Sigmoid colon (tissue), 7 donors: ENCODE measurements at regions of chr10 and their contacts with region 1.

Region 1: DNA sequence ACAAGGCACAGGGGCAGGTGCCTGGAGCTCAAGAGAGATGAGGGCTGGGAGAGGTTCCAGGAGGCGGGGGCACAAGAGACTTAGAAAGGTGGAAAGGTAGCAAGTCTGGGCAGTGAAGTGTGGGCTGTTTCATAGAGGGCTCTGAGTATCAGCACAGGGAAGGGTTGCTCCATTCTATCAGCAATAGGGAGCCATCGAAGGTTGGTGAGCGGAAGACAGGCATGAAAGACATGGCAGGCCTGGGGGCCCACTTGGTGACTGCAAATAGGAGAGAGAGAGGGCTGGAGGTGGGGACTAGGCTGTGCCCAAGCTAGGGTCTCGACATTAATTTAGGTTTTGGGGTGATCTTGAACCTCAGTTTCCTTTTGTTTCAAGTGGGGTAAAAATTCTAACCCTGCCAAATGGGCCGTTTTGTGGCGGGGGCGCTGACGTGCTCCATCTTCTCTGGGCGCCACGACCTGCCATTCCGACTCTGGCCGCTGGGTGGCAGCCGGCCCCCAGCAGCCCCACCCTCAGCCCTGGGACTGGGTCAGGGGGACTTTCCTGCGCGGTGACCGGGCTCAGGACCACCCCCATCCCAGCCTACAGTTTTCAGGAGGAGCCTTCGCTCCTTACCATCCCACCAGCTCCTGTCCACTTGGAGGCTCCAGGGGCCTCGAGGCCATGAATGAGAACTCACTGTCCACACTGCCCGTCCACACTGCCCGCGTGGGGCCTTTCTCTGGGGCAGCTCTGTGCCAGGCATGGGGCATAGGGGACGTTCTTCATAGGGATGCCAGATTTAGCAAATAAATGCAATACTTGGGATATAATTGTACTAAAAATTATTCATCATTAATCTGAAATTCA is 37.2 kb upstream of the PCBD1 start:
- DNase-seq: no peak
- H3K4me3 ChIP-seq: no peak overlapping the region
- H3K27ac ChIP-seq: no peak overlapping the region
- H3K4me1 ChIP-seq: peaks cover 0 to 15% (median 7%) of the 10 kb centered on the region in 4 donors
- H3K27me3 ChIP-seq: no peaks in the 10 kb centered on the region
- CTCF ChIP-seq: peak; percentile 82 to 98 (median 90)
- EP300 ChIP-seq: no peak
- POLR2A ChIP-seq: no peak

Region 2: GRCh38 chr10:70191972-70192305 is 733.7 kb before region 1 on chr10:
- intact Hi-C with region 1: no loop called
- DNase-seq: no peak
- H3K4me3 ChIP-seq: no peak overlapping the region
- H3K27ac ChIP-seq: peak overlapping the region in 2 of 4 donors; percentile 16 to 25
- H3K4me1 ChIP-seq: peaks cover 0 to 12% (median 0%) of the 10 kb centered on the region in 4 donors
- H3K27me3 ChIP-seq: no peaks in the 10 kb centered on the region
- CTCF ChIP-seq: no peak
- EP300 ChIP-seq: no peak
- POLR2A ChIP-seq: no peak

Region 3: DNA sequence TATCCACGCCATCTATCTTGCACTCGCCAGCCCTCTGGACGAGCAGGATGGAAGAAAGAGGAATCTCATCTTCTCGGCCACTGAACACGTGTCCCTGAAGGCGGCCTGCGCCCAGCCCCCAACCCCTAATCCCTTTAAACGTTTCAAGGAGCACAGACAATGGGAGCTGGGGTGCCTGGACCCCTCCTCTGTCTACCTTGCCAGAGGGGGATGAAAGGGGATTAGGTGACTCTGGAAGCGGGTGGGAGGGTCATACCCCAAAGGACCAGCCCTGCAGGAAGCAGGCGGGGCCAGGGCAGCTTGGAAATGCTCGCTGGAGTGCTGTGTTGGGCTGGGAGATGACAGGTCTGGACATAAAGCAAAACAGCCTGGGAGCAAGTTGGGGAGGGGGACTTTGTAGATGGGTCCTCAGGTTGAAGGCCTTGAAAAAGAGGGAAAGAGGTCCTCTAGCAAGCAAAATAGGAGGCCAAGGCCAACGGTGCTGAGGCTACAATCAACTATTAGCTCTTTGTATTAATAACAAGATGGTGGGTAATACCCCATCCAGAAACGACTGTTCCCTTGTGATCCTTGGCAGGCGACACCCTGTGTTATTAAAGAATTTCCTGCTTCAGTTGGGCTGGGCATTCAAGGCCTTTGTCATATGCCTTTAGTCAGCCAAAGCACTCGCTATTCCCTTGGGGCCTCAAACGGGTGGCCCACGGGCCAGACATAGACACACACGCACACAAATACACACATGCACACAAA is 160.3 kb after region 1 on chr10:
- intact Hi-C with region 1: no loop called
- DNase-seq: peak; percentile 48
- H3K4me3 ChIP-seq: no peak overlapping the region
- H3K27ac ChIP-seq: no peak overlapping the region
- H3K4me1 ChIP-seq: no peaks in the 10 kb centered on the region
- H3K27me3 ChIP-seq: no peaks in the 10 kb centered on the region
- CTCF ChIP-seq: no peak
- EP300 ChIP-seq: no peak
- POLR2A ChIP-seq: no peak

Region 4: DNA sequence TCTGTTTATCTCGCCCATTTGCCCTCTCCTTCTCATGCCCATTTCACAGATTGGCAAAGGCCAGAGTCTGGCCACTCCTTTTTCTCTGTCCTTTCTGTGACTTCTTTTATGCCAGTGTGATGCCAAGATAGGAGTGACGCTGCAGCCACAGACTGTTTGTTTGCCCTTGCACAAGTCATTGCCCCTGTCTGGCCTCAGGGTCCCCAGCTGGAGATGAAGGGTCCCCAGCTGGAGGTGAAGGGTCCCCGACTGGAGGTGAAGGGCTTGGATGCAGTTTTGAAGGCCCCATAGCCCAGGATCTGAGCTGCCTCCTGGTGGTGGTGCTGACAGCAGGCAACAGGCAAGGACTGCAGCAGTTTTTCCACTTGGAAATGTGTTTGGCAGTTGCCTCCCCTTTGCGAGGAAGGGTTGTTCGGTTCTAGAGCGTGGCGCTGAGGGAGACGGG is 342.7 kb after region 1 on chr10:
- intact Hi-C with region 1: loop called (anchors 5 kb)
- DNase-seq: no peak
- H3K4me3 ChIP-seq: no peak overlapping the region
- H3K27ac ChIP-seq: peak overlapping the region in 1 of 4 donors; percentile 26
- H3K4me1 ChIP-seq: peaks cover 2 to 52% (median 33%) of the 10 kb centered on the region in 4 donors
- H3K27me3 ChIP-seq: no peaks in the 10 kb centered on the region
- CTCF ChIP-seq: peak; percentile 29 to 38 (median 33)
- EP300 ChIP-seq: no peak
- POLR2A ChIP-seq: no peak

Region 5: GRCh38 chr10:71285180-71285545 is 359.6 kb after region 1 on chr10:
- intact Hi-C with region 1: loop called (anchors 1 kb)
- DNase-seq: no peak
- H3K4me3 ChIP-seq: no peak overlapping the region
- H3K27ac ChIP-seq: no peak overlapping the region
- H3K4me1 ChIP-seq: no peaks in the 10 kb centered on the region
- H3K27me3 ChIP-seq: no peaks in the 10 kb centered on the region
- CTCF ChIP-seq: peak; percentile 52 to 79 (median 68)
- EP300 ChIP-seq: no peak
- POLR2A ChIP-seq: no peak